IMR-90 (cell line): ENCODE measurements at regions of chr12 and their contacts with region 1.

Region 1: DNA sequence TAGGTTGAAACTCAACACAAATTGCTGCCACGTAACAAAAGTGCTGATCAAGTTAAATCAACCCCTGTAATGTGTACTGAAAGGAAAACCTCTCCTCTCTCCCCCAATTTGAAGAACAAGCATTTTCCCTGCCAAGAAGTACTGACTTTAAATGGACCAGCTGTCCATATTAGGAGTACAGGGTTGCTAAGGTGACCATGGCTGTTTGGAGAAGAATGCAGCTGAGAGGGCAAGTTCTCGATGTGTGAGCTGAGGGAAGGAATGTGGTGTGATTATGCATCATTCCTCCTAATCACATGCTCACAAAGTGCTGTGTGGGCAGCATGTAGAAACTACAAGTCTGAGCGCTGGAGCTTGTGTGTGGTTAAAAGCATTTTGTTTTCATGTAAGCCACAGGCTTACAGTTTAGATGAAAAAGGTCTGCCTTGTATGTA is 50.9 kb upstream of the CCT2 start:
- DNase-seq: peak; percentile 100
- ATAC-seq: peak; percentile 99
- H3K4me3 ChIP-seq: no peak overlapping the region
- H3K27ac ChIP-seq: peak overlapping the region; percentile 12; the same call in 1 of the 2 replicates
- H3K4me1 ChIP-seq: no peaks in the 10 kb centered on the region; the same call in 1 of the 2 replicates
- H3K27me3 ChIP-seq: no peaks in the 10 kb centered on the region
- CTCF ChIP-seq: no peak
- POLR2A ChIP-seq: peak; percentile 70
- RAD21 ChIP-seq: no peak; the same call in 1 of the 2 replicates

Region 2: DNA sequence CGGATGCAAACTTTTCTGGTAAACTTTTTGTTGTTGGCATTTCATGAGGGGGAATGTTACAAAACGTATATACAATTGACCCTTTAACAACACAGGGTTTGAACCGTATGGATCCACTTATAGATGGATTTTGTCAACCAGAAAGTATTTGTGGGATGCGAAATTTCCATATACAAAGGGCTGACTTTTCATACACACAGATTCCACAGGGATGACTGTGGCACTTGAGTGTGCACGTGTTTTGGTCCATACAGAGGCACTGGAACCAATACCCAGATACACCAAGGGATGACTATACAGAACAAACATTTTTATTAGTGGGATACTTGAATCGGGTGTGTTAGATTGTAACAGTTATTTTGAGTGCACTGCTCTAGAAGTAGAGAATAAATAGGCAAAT is 21.1 kb after region 1 on chr12:
- CTCF ChIA-PET with region 1: interaction called, 10 read pairs
- POLR2A ChIA-PET with region 1: no interaction called
- dilution Hi-C with region 1: no loop called
- in situ Hi-C with region 1: no loop called
- intact Hi-C with region 1: loop called (anchors 1 kb)
- DNase-seq: peak; percentile 98
- ATAC-seq: peak; percentile 97
- H3K4me3 ChIP-seq: no peak overlapping the region
- H3K27ac ChIP-seq: peak overlapping the region; percentile 79; the same call in 1 of the 2 replicates
- H3K4me1 ChIP-seq: peaks cover 11% of the 10 kb centered on the region
- H3K27me3 ChIP-seq: no peaks in the 10 kb centered on the region
- CTCF ChIP-seq: no peak
- POLR2A ChIP-seq: no peak
- RAD21 ChIP-seq: no peak

Region 3: GRCh38 chr12:69662764-69663163 is 128.4 kb after region 1 on chr12:
- CTCF ChIA-PET with region 1: no interaction called
- POLR2A ChIA-PET with region 1: no interaction called
- dilution Hi-C with region 1: no loop called
- in situ Hi-C with region 1: no loop called
- intact Hi-C with region 1: no loop called
- DNase-seq: no peak
- ATAC-seq: no peak
- H3K4me3 ChIP-seq: no peak overlapping the region
- H3K27ac ChIP-seq: no peak overlapping the region
- H3K4me1 ChIP-seq: peaks cover 2% of the 10 kb centered on the region; the same call in 1 of the 2 replicates
- H3K27me3 ChIP-seq: no peaks in the 10 kb centered on the region; the same call in 1 of the 2 replicates
- CTCF ChIP-seq: no peak
- POLR2A ChIP-seq: no peak
- RAD21 ChIP-seq: no peak